Activated naive CD4-positive, alpha-beta T cell treated with anti-CD3 and anti-CD28 coated beads for 36 hours (primary cell): ENCODE measurements at regions of chr19 and their contacts with region 1.

Region 1: DNA sequence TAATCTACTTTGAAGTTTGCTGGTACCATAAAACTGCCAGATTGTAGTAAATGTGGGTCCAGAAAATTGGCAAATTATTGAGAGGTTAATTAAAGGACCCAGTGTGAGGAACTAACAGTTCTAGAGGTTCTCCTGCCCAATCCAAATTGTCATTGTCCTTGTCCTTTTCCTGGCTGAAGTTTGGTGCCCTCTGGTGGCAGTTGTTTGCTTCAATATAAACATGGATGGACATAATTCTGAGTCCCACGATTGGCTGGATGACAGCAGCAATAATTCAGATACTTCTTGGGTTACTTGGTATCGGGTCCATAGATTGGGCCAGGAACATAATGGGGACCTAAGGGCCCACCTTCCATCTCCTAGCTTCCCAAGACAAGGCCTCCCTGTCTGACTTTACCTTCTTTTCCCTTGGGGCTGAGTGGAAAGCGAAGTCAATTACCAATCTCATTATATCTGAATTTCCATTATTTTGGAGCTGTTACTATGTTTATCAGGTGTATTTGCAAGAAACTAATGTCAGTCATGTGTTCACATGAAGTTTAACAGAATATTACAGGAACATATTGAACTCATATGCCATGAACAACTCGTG is 33.8 kb upstream of the GARRE1 start:
- DNase-seq: peak; percentile 83
- H3K4me3 Mint-ChIP-seq: no peak overlapping the region
- H3K27ac Mint-ChIP-seq: peak overlapping the region; percentile 59
- H3K4me1 Mint-ChIP-seq: peaks cover 54% of the 10 kb centered on the region
- H3K27me3 Mint-ChIP-seq: no peaks in the 10 kb centered on the region

Region 2: GRCh38 chr19:33809957-33810356 is 410.6 kb before region 1 on chr19:
- CTCF ChIA-PET with region 1: no interaction called
- intact Hi-C with region 1: no loop called
- DNase-seq: no peak
- H3K4me3 Mint-ChIP-seq: no peak overlapping the region
- H3K27ac Mint-ChIP-seq: no peak overlapping the region
- H3K4me1 Mint-ChIP-seq: no peaks in the 10 kb centered on the region
- H3K27me3 Mint-ChIP-seq: no peaks in the 10 kb centered on the region

Region 3: GRCh38 chr19:34120846-34121639 is 99.5 kb before region 1 on chr19:
- CTCF ChIA-PET with region 1: no interaction called
- intact Hi-C with region 1: loop called (anchors 1 kb)
- DNase-seq: peak; percentile 77
- H3K4me3 Mint-ChIP-seq: no peak overlapping the region
- H3K27ac Mint-ChIP-seq: no peak overlapping the region
- H3K4me1 Mint-ChIP-seq: peaks cover 27% of the 10 kb centered on the region
- H3K27me3 Mint-ChIP-seq: no peaks in the 10 kb centered on the region

Region 4: DNA sequence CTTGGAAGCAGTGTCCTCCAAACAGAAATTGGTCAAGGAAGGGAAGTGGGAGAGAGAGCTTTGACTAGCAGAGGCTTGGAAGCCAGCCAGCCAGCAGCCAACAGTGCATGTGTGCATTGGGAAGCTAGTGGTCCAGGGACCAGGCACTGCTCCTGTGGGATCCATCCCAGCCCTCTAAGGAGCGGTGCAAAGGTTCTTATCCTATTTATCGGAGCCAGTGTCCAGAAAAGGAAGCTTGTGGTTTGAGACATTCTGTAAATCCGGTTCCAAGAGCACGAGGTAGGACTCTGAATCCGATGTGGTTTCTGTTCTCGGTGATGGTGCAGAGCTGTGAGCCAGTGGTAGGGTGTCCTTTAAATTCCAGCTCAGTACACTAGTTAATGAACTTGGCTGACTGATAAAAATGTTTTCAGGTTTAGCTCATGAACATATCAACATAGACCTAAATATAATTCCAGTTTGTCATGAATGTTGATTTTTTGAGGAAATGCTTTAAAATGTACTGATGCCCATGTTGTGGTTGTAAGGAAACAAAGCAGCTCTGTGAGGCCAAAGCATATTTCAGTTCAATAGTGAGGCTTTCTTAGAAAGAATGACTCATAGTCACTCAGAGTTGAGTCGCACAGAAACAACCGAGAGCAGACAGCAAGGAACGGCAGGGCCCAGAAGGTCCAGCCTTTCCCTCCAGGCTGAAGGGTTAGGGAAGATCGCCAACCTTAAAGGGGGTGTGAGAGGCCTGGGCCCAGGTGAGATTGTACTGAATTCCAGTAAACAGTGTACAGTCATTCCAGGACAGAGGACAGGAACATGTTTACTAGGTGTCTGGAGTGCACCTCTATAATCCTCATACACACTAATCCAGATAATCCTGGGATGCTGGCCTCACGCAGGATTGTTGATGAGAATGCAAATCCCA is 12.3 kb after region 1 on chr19:
- CTCF ChIA-PET with region 1: interaction called, 7 read pairs
- intact Hi-C with region 1: loop called (anchors 1 kb)
- DNase-seq: peak; percentile 50
- H3K4me3 Mint-ChIP-seq: no peak overlapping the region
- H3K27ac Mint-ChIP-seq: peak overlapping the region; percentile 75
- H3K4me1 Mint-ChIP-seq: peaks cover 21% of the 10 kb centered on the region
- H3K27me3 Mint-ChIP-seq: no peaks in the 10 kb centered on the region

Region 5: DNA sequence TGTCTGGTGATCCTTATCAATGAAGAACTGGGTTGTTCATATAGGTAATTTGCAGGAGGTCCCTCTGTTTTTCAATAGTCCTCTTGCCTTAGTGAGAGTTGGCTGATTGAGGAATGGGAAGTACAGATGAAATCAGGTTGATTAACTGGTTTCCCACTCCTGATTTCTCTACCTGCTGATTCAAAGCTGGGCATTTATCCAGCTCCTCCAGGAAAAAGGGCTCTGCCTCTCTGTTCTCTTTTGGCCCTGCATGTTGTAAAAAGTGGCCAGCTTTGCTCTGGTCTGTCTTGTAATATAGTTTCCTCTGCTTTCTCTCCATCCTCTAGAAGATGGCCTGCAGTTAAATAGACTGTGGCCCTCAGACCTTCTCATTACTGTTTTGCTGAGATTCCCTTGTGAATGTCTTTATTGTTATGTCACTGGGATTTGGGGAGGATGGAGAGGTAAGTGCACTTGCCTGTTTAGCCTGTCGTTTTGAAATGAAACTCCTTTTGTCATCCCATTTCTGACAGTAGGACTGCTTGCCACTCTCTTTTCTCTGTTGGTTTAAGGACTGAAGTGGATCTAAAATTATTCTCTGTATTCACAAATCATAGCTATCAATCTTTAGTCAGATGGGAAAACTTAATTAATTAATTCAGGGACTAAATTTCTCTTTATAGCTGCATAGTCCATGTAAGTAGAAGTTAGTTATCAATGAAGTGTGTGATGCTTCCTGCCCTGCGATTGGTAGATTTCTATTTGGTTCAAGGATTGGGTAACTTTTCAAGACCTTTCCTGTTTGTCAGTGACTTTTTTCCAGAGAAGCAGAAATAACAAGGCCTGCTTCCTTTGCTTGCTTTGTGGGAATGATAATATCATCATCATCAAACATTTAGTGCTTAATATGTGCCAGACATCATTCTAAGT is 62.3 kb after region 1 on chr19:
- CTCF ChIA-PET with region 1: no interaction called
- intact Hi-C with region 1: no loop called
- DNase-seq: no peak
- H3K4me3 Mint-ChIP-seq: no peak overlapping the region
- H3K27ac Mint-ChIP-seq: no peak overlapping the region
- H3K4me1 Mint-ChIP-seq: peaks cover 35% of the 10 kb centered on the region
- H3K27me3 Mint-ChIP-seq: no peaks in the 10 kb centered on the region

Region 6: GRCh38 chr19:34336781-34337271 is 116.3 kb after region 1 on chr19:
- CTCF ChIA-PET with region 1: interaction called, 5 read pairs
- intact Hi-C with region 1: loop called (anchors 2 kb)
- DNase-seq: peak; percentile 69
- H3K4me3 Mint-ChIP-seq: no peak overlapping the region
- H3K27ac Mint-ChIP-seq: no peak overlapping the region
- H3K4me1 Mint-ChIP-seq: peaks cover 9% of the 10 kb centered on the region
- H3K27me3 Mint-ChIP-seq: no peaks in the 10 kb centered on the region

Region 7: DNA sequence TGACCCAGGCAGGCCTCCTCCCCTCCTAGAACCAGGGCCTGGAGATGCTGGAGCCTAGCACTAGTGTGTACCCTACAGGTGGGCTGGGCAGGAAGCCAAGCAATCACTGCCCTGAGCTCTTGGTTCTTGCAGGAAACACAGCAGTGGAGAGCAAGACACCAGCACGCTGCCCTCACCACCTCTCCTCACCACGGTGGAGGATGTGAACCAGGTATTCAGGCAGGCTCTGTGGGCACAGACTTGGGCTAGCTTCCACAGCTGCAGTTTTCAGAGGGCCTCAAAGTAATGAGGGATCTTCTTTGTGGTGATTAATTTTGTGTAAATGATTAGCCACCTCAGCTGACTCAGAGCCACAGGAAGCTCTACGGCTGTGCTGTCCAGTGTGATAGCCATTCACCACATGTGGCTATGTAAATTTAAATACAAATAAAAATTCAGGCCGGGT is 130.8 kb after region 1 on chr19:
- CTCF ChIA-PET with region 1: interaction called, 14 read pairs
- intact Hi-C with region 1: loop called (anchors 1 kb)
- DNase-seq: no peak
- H3K4me3 Mint-ChIP-seq: no peak overlapping the region
- H3K27ac Mint-ChIP-seq: peak overlapping the region; percentile 81
- H3K4me1 Mint-ChIP-seq: peaks cover 18% of the 10 kb centered on the region
- H3K27me3 Mint-ChIP-seq: no peaks in the 10 kb centered on the region